Calu3 (cell line): ENCODE measurements at regions of chr13 and their contacts with region 1.

Region 1: GRCh38 chr13:26377038-26377437 is 123.1 kb downstream of the CDK8 start:
- DNase-seq: peak; percentile 2
- H3K4me3 Mint-ChIP-seq: no peak overlapping the region
- H3K27ac Mint-ChIP-seq: no peak overlapping the region
- H3K4me1 Mint-ChIP-seq: no peaks in the 10 kb centered on the region
- H3K27me3 Mint-ChIP-seq: no peaks in the 10 kb centered on the region
- CTCF ChIP-seq: peak; percentile 26

Region 2: GRCh38 chr13:26324867-26325266 is 52.2 kb before region 1 on chr13:
- CTCF ChIA-PET with region 1: no interaction called
- intact Hi-C with region 1: no loop called
- DNase-seq: no peak
- H3K4me3 Mint-ChIP-seq: no peak overlapping the region
- H3K27ac Mint-ChIP-seq: no peak overlapping the region
- H3K4me1 Mint-ChIP-seq: peaks cover 10% of the 10 kb centered on the region
- H3K27me3 Mint-ChIP-seq: no peaks in the 10 kb centered on the region
- CTCF ChIP-seq: no peak

Region 3: DNA sequence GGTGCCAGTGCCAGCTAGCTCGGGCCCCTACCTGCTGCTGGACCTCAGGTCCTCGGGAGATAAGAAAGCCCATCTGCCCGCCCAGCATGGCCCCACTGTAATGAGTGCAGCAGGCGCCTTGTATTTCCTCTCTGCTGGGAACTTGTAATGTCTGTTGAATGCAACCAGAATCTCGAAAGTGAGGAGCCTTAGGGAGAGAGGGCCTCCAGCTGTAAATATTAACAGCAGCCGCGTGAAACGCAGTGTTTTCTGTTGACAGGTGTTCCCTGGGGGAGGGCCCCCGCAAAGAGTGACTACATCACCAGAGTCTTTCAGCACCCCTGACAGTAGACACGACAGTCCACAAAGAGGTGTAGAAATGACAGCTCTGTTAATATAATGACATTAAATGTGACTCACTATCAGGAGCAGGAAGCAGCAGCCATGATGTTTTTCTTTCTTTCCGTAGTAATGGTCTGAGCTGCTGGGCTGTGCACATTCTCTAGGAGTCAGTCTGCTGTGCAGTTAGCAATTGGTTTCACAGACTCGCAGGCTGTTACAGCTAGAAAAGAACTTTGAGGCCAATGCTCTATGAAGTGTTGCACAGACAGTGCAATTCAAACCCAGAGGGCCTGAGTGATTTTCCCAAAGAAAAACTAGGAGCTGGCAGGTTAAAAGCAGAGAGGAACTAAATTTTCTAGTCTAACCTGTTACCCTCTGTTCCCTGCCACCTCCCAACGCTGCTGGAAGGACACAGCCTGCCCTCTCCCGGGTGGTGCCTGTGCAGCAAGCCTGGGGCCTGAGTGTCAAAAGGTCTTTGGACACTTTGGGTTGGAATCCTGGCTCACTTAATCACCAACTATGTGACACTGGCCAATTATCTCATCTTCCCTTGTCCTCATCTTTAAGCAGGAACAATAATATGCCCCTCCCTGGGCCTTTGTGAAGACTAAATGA is 121.9 kb after region 1 on chr13:
- CTCF ChIA-PET with region 1: interaction called, 6 read pairs
- intact Hi-C with region 1: loop called (anchors 5 kb)
- DNase-seq: peak; percentile 20
- H3K4me3 Mint-ChIP-seq: no peak overlapping the region
- H3K27ac Mint-ChIP-seq: no peak overlapping the region
- H3K4me1 Mint-ChIP-seq: peaks cover 9% of the 10 kb centered on the region
- H3K27me3 Mint-ChIP-seq: peaks cover 12% of the 10 kb centered on the region
- CTCF ChIP-seq: no peak